PC-9 (cell line): ENCODE measurements at regions of chr5 and their contacts with region 1.

Region 1: GRCh38 chr5:164038128-164038783 is 532.8 kb downstream of the MAT2B start:
- DNase-seq: no peak
- H3K4me3 ChIP-seq: no peak overlapping the region
- H3K27ac ChIP-seq: no peak overlapping the region
- H3K4me1 ChIP-seq: no peaks in the 10 kb centered on the region
- H3K27me3 ChIP-seq: no peaks in the 10 kb centered on the region
- CTCF ChIP-seq: no peak

Region 2: GRCh38 chr5:165502893-165503691 is 1464.8 kb after region 1 on chr5:
- CTCF ChIA-PET with region 1: no interaction called
- POLR2A ChIA-PET with region 1: interaction called, 10 read pairs
- intact Hi-C with region 1: no loop called
- DNase-seq: no peak
- H3K4me3 ChIP-seq: peak overlapping the region; percentile 33; the same call in 1 of the 2 replicates
- H3K27ac ChIP-seq: no peak overlapping the region
- H3K4me1 ChIP-seq: no peaks in the 10 kb centered on the region
- H3K27me3 ChIP-seq: no peaks in the 10 kb centered on the region
- CTCF ChIP-seq: no peak